CD8-positive, alpha-beta T cell (primary cell): ENCODE measurements at regions of chr6 and their contacts with region 1.

Region 1: DNA sequence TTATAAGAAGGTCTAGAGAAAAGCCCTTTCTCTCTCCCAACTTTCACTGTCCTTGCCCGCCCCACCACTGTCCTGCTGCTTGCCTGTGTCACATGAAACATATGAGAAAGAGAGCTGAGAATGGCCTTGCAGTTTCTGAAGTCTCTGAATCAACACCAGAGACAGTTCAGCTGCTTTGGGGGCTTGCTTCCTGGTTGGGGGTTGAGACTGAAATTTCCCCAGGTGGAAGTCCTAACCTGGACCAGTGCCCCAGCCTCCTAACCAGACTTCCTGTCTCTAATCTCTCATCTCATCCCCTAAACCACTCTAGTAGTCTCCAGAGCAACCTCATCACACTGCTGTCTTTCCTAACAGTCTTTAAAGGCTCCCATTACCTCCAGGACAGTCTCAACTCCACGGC is 10.7 kb downstream of the TRAM2 start:
- DNase-seq: no peak
- ATAC-seq: no peak
- H3K4me3 ChIP-seq: no peak overlapping the region
- H3K4me3 Mint-ChIP-seq: no peak overlapping the region
- H3K27ac ChIP-seq: no peak overlapping the region
- H3K27ac Mint-ChIP-seq: no peak overlapping the region
- H3K4me1 ChIP-seq: peaks cover 9% of the 10 kb centered on the region
- H3K4me1 Mint-ChIP-seq: peaks cover 60% of the 10 kb centered on the region
- H3K27me3 ChIP-seq: no peaks in the 10 kb centered on the region
- H3K27me3 Mint-ChIP-seq: no peaks in the 10 kb centered on the region
- CTCF ChIP-seq: no peak

Region 2: DNA sequence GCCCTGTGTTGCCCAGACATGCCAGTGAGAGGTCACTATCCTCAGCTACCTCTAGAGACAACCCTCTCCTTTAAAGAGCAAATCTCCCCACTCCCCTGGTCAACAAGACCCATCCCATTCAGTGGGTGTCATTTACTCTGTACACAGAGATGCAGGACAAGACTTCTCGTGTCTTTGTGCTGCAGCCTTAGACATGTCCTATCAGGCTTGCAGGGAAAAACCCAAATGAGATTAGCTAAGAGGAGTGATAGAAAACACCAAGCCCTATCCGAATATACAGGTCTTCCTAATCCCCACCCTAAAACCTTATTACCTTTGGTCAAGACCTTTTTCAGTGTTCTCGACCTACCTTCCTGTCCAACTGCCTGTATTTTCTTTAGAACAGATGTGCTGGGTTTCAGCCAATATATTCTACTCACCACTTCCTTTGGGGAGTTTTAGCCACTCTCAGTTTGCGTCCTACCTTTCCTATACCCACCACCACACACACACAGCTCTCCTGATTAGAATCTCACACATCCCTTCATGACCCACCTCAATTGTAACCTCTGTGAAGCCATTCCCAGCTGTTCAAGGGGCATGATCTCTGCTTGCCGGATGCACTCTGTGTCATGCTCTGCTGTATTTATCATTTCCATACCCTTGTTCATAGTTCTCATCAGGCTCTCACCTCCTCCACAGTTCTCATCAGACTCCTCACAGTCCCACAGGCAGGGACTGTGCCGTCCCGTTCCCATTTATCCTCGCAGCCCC is 29.0 kb before region 1 on chr6:
- CTCF ChIA-PET with region 1: no interaction called
- POLR2A ChIA-PET with region 1: no interaction called
- intact Hi-C with region 1: loop called in 1 of 2 experiments (anchors 1 kb)
- DNase-seq: peak in 2 of 9 experiments; percentile 10 to 36
- ATAC-seq: peak; percentile 49
- H3K4me3 ChIP-seq: no peak overlapping the region
- H3K4me3 Mint-ChIP-seq: no peak overlapping the region
- H3K27ac ChIP-seq: no peak overlapping the region
- H3K27ac Mint-ChIP-seq: no peak overlapping the region
- H3K4me1 ChIP-seq: peaks cover 38% of the 10 kb centered on the region
- H3K4me1 Mint-ChIP-seq: peaks cover 42% of the 10 kb centered on the region
- H3K27me3 ChIP-seq: no peaks in the 10 kb centered on the region
- H3K27me3 Mint-ChIP-seq: no peaks in the 10 kb centered on the region
- CTCF ChIP-seq: no peak